B cell (primary cell): ENCODE measurements at regions of chr1 and their contacts with region 1.

Region 1: DNA sequence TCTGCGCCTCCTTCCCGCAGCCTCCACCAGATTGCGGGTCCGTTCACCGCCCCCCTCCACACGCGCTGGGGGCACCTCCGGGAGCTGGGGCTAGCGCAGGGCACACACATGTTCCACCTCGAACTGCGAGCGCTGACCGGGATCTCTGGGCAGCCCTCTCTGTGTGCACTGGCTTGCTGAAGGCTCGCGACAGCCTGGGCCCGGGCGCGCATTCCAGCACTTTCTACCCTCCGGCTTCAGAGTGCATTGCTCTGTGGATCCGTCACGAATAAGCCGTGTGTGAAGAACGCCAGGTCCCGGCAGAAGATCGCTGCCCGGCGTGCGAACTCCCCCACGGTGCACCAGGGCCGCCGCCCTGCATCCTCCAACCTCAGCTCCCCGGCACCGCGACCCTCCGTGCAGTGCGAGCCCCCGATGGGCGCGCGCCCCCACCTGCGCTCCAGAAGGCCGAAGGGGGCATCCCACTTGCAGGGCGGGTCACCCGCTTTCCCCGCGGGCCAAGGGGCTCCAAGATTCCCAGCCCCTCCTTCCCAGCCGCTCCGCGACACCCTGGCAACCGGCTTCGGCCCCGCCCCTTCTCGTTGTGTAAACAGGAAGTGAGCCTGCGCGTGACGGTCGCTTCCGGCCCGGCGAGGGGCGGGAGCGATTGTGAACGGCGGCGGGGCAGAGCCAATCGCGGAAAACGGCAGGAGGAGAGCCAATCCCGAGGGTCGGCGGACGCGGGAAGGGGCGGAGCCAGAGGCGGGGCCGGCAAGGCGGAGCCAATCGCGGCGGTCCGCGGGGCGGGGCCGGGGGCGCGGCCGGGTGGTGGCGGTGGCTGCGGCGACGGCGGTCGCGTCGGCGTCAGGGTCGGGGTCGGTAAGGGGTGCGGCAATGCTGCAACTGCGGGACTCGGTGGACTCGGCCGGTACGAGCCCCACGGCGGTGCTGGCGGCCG is at the start of gene TPRG1L:
- DNase-seq: peak; percentile 99
- ATAC-seq: peak; percentile 98
- H3K4me3 ChIP-seq: peak within 1 kb of the TSS; percentile 58 to 97 (median 88)
- H3K4me3 Mint-ChIP-seq: peak within 1 kb of the TSS; percentile 93
- H3K27ac ChIP-seq: peak within 1 kb of the TSS; percentile 63 to 71
- H3K27ac Mint-ChIP-seq: peak within 1 kb of the TSS; percentile 92
- H3K4me1 ChIP-seq: peaks cover 18 to 29% of the 10 kb centered on the region in 2 donors
- H3K4me1 Mint-ChIP-seq: peaks cover 48% of the 10 kb centered on the region
- H3K27me3 ChIP-seq: no peaks in the 10 kb centered on the region
- H3K27me3 Mint-ChIP-seq: no peaks in the 10 kb centered on the region
- CTCF ChIP-seq: no peak
- total RNA-seq, gene TPRG1L: 47.5 and 48.6 TPM in 2 replicates

Region 2: GRCh38 chr1:2412519-2413233 is 1211.8 kb before region 1 on chr1 and contains the start of gene PEX10:
- CTCF ChIA-PET with region 1: no interaction called
- POLR2A ChIA-PET with region 1: interaction called, 5 read pairs
- intact Hi-C with region 1: loop called (anchors 10 kb)
- DNase-seq: peak; percentile 98
- ATAC-seq: peak; percentile 94
- H3K4me3 ChIP-seq: peak within 1 kb of the TSS; percentile 19 to 78 (median 69)
- H3K4me3 Mint-ChIP-seq: peak within 1 kb of the TSS; percentile 89
- H3K27ac ChIP-seq: peak within 1 kb of the TSS; percentile 52 to 90
- H3K27ac Mint-ChIP-seq: peak within 1 kb of the TSS; percentile 92
- H3K4me1 ChIP-seq: peaks cover 45 to 51% of the 10 kb centered on the region in 2 donors
- H3K4me1 Mint-ChIP-seq: peaks cover 43% of the 10 kb centered on the region
- H3K27me3 ChIP-seq: no peaks in the 10 kb centered on the region
- H3K27me3 Mint-ChIP-seq: no peaks in the 10 kb centered on the region
- CTCF ChIP-seq: no peak
- total RNA-seq, gene PEX10: 16.5 and 18.4 TPM in 2 replicates

Region 3: GRCh38 chr1:2949966-2950925 is 674.2 kb before region 1 on chr1:
- CTCF ChIA-PET with region 1: no interaction called
- POLR2A ChIA-PET with region 1: no interaction called
- intact Hi-C with region 1: no loop called
- DNase-seq: peak; percentile 37
- ATAC-seq: peak; percentile 55
- H3K4me3 ChIP-seq: no peak overlapping the region
- H3K4me3 Mint-ChIP-seq: peak overlapping the region; percentile 42
- H3K27ac ChIP-seq: peak overlapping the region in 1 of 2 donors; percentile 44
- H3K27ac Mint-ChIP-seq: peak overlapping the region; percentile 82
- H3K4me1 ChIP-seq: peaks cover 37 to 78% of the 10 kb centered on the region in 2 donors
- H3K4me1 Mint-ChIP-seq: peaks cover 58% of the 10 kb centered on the region
- H3K27me3 ChIP-seq: peaks cover 0 to 2% (median under 1%) of the 10 kb centered on the region in 4 experiments
- H3K27me3 Mint-ChIP-seq: no peaks in the 10 kb centered on the region
- CTCF ChIP-seq: no peak

Region 4: DNA sequence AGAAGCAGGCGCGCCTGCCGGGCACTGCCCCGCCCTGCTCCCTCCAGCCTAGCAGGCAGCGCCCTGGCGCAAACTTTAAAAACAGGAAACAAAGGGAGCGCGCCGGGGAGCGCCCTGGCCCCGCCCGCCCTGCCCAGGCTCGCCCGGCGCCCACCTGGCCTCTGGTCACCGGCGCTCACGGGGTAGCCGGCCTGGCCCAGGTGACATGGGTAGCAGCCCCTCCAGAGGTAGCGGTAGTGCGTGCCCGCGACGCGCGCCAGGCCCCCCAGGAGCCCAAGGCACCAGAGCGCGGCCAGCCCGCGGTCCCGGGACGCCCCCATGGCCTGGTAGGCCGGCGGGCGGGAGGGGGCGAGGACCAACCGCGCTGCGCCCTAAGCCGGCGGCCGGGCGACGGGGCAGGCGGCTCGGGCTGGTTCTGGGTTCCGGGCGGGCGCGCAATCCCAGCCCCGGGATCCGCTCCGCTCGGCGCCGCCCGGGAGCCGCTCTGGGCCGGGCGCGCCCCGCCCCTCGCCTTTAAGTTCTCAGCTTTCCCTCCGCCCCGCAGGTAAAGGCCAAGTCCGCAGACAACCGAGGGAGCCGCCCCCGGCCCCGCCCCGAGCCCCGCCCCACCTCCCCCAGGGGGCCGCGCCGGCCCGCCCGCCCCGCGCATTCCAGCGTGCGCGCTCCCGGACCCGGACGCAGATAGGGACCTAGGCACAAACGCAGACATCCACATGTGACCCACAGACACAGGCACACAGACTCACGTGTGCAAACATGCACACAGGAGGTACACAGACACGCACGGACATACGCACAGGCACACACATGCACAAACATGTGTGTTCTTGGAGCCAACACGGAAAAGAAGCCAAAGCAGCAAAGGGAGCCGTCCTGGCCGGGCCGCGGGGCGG is 93.3 kb before region 1 on chr1:
- CTCF ChIA-PET with region 1: interaction called, 17 read pairs
- POLR2A ChIA-PET with region 1: no interaction called
- intact Hi-C with region 1: loop called (anchors 1 kb)
- DNase-seq: peak; percentile 84
- ATAC-seq: peak; percentile 81
- H3K4me3 ChIP-seq: peak overlapping the region; percentile 45 to 74 (median 61)
- H3K4me3 Mint-ChIP-seq: peak overlapping the region; percentile 86
- H3K27ac ChIP-seq: peak overlapping the region; percentile 52 to 71
- H3K27ac Mint-ChIP-seq: peak overlapping the region; percentile 85
- H3K4me1 ChIP-seq: peaks cover 9 to 14% of the 10 kb centered on the region in 2 donors
- H3K4me1 Mint-ChIP-seq: peaks cover 17% of the 10 kb centered on the region
- H3K27me3 ChIP-seq: no peaks in the 10 kb centered on the region
- H3K27me3 Mint-ChIP-seq: no peaks in the 10 kb centered on the region
- CTCF ChIP-seq: no peak

Region 5: GRCh38 chr1:3676581-3677470 is 52.4 kb after region 1 on chr1:
- CTCF ChIA-PET with region 1: interaction called, 6 read pairs
- POLR2A ChIA-PET with region 1: no interaction called
- intact Hi-C with region 1: loop called (anchors 2 kb)
- DNase-seq: peak; percentile 66
- ATAC-seq: peak; percentile 29
- H3K4me3 ChIP-seq: peak overlapping the region in 3 of 5 experiments; percentile 8 to 43 (median 9)
- H3K4me3 Mint-ChIP-seq: peak overlapping the region; percentile 44
- H3K27ac ChIP-seq: peak overlapping the region; percentile 60 to 77
- H3K27ac Mint-ChIP-seq: peak overlapping the region; percentile 79
- H3K4me1 ChIP-seq: peaks cover 52 to 86% of the 10 kb centered on the region in 2 donors
- H3K4me1 Mint-ChIP-seq: peaks cover 75% of the 10 kb centered on the region
- H3K27me3 ChIP-seq: peaks cover 0 to 3% (median 0%) of the 10 kb centered on the region in 4 experiments
- H3K27me3 Mint-ChIP-seq: no peaks in the 10 kb centered on the region
- CTCF ChIP-seq: no peak

Region 6: GRCh38 chr1:3796215-3797061 is 172.0 kb after region 1 on chr1 and contains the start of gene LRRC47:
- CTCF ChIA-PET with region 1: no interaction called
- POLR2A ChIA-PET with region 1: no interaction called
- intact Hi-C with region 1: loop called (anchors 1 kb)
- DNase-seq: peak; percentile 92
- ATAC-seq: peak; percentile 99
- H3K4me3 ChIP-seq: peak within 1 kb of the TSS; percentile 50 to 91 (median 79)
- H3K4me3 Mint-ChIP-seq: peak within 1 kb of the TSS; percentile 97
- H3K27ac ChIP-seq: peak within 1 kb of the TSS; percentile 58 to 68
- H3K27ac Mint-ChIP-seq: peak within 1 kb of the TSS; percentile 94
- H3K4me1 ChIP-seq: peaks cover 15 to 31% of the 10 kb centered on the region in 2 donors
- H3K4me1 Mint-ChIP-seq: peaks cover 38% of the 10 kb centered on the region
- H3K27me3 ChIP-seq: peaks cover 0 to 10% (median 0%) of the 10 kb centered on the region in 4 experiments
- H3K27me3 Mint-ChIP-seq: peaks cover 10% of the 10 kb centered on the region
- CTCF ChIP-seq: no peak
- total RNA-seq, gene LRRC47: 48.2 and 49.7 TPM in 2 replicates

Region 7: GRCh38 chr1:3900119-3900968 is 275.9 kb after region 1 on chr1 and contains the start of gene C1orf174:
- CTCF ChIA-PET with region 1: no interaction called
- POLR2A ChIA-PET with region 1: interaction called, 3 read pairs
- intact Hi-C with region 1: loop called (anchors 2 kb)
- DNase-seq: peak; percentile 99
- ATAC-seq: peak; percentile 76
- H3K4me3 ChIP-seq: peak within 1 kb of the TSS; percentile 59 to 98 (median 84)
- H3K4me3 Mint-ChIP-seq: peak within 1 kb of the TSS; percentile 93
- H3K27ac ChIP-seq: peak within 1 kb of the TSS; percentile 84 to 95
- H3K27ac Mint-ChIP-seq: peak within 1 kb of the TSS; percentile 96
- H3K4me1 ChIP-seq: peaks cover 10 to 25% of the 10 kb centered on the region in 2 donors
- H3K4me1 Mint-ChIP-seq: peaks cover 28% of the 10 kb centered on the region
- H3K27me3 ChIP-seq: no peaks in the 10 kb centered on the region
- H3K27me3 Mint-ChIP-seq: no peaks in the 10 kb centered on the region
- CTCF ChIP-seq: no peak
- total RNA-seq, gene C1orf174: 33.2 and 35.7 TPM in 2 replicates